Naive thymus-derived CD4-positive, alpha-beta T cell (primary cell): ENCODE measurements at regions of chr16 and their contacts with region 1.

Region 1: DNA sequence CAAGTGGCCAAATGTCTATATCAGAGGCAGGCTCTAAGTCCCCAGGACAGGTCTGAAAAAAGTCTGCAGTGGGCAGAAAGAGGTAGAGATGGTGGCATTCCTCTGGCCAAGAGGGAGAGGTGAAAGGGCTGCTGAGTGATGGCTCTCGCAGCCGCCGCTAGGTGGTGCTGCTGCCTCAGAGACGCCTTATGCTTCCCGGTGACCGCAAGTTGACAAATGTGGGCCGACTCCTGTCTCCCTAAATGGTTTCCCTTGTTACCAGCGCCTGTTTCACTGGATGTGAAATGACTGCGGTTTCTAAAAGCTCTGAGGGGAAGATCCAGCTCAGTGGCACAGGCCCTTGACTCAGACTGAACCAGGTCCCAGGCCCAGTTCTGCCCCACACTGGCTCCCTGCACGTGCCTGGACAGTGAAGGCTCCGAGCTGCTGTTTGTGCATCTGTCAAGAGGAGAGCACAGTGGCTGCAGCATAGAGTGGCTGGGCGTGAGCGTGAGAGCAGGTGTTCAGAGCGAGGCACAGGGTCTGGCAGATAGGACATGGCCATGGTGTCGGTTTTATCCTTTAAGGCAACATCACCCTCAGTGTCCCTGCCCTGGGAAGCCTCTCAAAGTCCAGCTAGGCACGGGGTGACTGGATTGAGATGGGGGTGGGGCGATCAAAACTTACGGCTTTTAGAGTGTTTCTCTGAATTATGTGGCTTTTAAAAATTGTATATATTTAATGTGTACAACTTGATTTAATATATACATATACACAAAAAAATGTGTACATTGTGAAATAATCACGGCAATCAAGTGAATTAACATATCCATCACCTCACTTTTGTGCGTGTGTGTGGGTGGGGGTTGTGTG is 19.9 kb downstream of the CLEC16A start:
- DNase-seq: peak; percentile 55 to 84 (median 69)
- ATAC-seq: peak; percentile 81
- H3K4me3 ChIP-seq: peak overlapping the region; percentile 3
- H3K4me3 Mint-ChIP-seq: peak overlapping the region in 6 of 10 donors; percentile 4 to 83 (median 52)
- H3K27ac ChIP-seq: no peak overlapping the region
- H3K27ac Mint-ChIP-seq: peak overlapping the region in 6 of 9 donors; percentile 47 to 91 (median 72)
- H3K4me1 ChIP-seq: peaks cover 11 to 18% of the 10 kb centered on the region in 2 donors
- H3K4me1 Mint-ChIP-seq: peaks cover 15 to 62% (median 28%) of the 10 kb centered on the region in 7 donors
- H3K27me3 ChIP-seq: no peaks in the 10 kb centered on the region
- H3K27me3 Mint-ChIP-seq: no peaks in the 10 kb centered on the region

Region 2: GRCh38 chr16:10652730-10653590 is 311.3 kb before region 1 on chr16:
- CTCF ChIA-PET with region 1: no interaction called
- POLR2A ChIA-PET with region 1: no interaction called
- intact Hi-C with region 1: no loop called
- DNase-seq: no peak
- ATAC-seq: no peak
- H3K4me3 ChIP-seq: no peak overlapping the region
- H3K4me3 Mint-ChIP-seq: no peak overlapping the region
- H3K27ac ChIP-seq: no peak overlapping the region
- H3K27ac Mint-ChIP-seq: no peak overlapping the region
- H3K4me1 ChIP-seq: no peaks in the 10 kb centered on the region
- H3K4me1 Mint-ChIP-seq: peaks cover 0 to 1% (median 0%) of the 10 kb centered on the region in 7 donors
- H3K27me3 ChIP-seq: no peaks in the 10 kb centered on the region
- H3K27me3 Mint-ChIP-seq: peaks cover 0 to 3% (median 0%) of the 10 kb centered on the region in 5 donors

Region 3: DNA sequence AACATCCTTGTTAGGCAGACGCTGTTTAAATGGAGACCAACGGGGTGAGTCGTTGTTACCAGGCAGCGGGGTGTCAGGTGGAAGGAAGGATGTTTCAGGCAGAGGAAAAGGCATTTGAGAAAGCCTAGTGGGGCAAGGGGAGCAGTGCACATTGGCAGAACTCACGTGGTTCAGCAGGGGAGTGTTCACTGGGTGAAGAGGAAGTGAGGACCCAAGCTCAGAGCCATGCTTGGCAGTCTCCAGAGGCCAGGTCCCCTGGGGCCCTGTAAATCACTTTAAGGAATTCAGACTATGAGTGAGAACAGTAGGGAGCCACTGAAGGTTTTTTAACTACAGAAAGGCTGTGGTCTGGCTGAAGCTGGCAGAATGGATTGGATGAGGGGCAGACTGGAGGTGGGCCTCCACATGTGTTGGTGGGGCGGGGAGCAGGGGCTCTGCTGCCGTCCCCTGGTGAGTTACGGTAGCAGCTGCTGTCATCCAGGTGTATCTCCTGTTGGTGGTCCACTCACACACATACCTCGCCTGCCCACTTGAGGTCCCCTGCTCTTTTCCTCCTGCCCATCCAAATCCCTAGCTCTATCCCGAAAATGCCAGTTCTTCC is 14.8 kb before region 1 on chr16:
- CTCF ChIA-PET with region 1: interaction called, 18 read pairs
- POLR2A ChIA-PET with region 1: interaction called, 5 read pairs
- intact Hi-C with region 1: loop called in 1 of 2 experiments (anchors 1 kb)
- DNase-seq: peak in 7 of 9 donors; percentile 41 to 69 (median 64)
- ATAC-seq: peak; percentile 83
- H3K4me3 ChIP-seq: no peak overlapping the region
- H3K4me3 Mint-ChIP-seq: peak overlapping the region in 9 of 10 donors; percentile 41 to 73 (median 60)
- H3K27ac ChIP-seq: peak overlapping the region; percentile 52
- H3K27ac Mint-ChIP-seq: peak overlapping the region; percentile 45 to 90 (median 76)
- H3K4me1 ChIP-seq: peaks cover 15 to 40% of the 10 kb centered on the region in 2 donors
- H3K4me1 Mint-ChIP-seq: peaks cover 31 to 78% (median 64%) of the 10 kb centered on the region in 7 donors
- H3K27me3 ChIP-seq: no peaks in the 10 kb centered on the region
- H3K27me3 Mint-ChIP-seq: no peaks in the 10 kb centered on the region

Region 4: DNA sequence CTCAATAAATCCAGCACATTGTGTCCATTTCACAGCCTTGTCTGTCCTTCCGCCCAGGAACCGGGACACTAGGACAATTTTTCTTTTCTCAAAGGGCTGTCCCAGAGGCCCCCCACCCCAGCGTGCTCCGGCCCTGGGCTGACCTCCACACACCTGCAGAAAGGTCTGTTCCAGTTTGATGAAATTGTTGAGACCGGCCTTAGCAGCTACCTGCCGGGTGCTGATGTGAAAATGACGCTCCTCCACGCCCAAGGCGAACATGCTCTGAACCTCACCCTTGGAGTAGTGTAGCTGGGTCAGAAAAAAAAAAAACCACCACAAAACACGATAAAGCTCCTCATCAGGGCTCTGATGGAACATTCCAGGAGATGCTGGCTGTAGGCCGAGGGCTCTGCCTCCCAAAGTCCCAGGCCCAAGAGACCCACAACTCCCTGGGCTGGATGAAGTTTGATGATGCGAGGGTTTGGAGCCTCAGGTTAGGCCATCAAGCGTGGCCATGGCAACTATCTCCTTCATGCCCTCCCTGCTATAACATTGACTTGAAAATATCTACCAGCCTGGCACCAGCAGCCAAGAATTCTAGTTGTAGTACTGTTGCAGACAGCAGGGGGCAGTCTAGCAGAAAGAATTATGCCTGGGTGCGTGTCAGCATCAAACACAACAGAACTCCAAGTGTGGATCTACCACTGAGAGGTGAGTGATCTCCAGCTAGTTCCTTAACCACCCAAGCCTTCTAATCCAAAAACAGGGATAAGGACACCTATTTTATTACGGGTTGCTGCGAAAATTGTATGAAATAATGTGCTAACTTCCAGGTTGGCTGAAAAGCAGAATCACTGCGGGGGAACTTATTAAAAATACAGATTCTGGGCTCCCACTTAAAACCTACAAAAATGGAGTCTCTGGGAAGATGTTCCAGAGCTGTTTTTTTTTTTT is 443.1 kb after region 1 on chr16:
- CTCF ChIA-PET with region 1: interaction called, 4 read pairs
- POLR2A ChIA-PET with region 1: no interaction called
- intact Hi-C with region 1: loop called (anchors 1 kb)
- DNase-seq: peak; percentile 44 to 78 (median 66)
- ATAC-seq: peak; percentile 85
- H3K4me3 ChIP-seq: no peak overlapping the region
- H3K4me3 Mint-ChIP-seq: no peak overlapping the region
- H3K27ac ChIP-seq: no peak overlapping the region
- H3K27ac Mint-ChIP-seq: peak overlapping the region in 2 of 9 donors; percentile 16 to 72
- H3K4me1 ChIP-seq: no peaks in the 10 kb centered on the region
- H3K4me1 Mint-ChIP-seq: peaks cover 0 to 5% (median 4%) of the 10 kb centered on the region in 7 donors
- H3K27me3 ChIP-seq: no peaks in the 10 kb centered on the region
- H3K27me3 Mint-ChIP-seq: no peaks in the 10 kb centered on the region

Region 5: DNA sequence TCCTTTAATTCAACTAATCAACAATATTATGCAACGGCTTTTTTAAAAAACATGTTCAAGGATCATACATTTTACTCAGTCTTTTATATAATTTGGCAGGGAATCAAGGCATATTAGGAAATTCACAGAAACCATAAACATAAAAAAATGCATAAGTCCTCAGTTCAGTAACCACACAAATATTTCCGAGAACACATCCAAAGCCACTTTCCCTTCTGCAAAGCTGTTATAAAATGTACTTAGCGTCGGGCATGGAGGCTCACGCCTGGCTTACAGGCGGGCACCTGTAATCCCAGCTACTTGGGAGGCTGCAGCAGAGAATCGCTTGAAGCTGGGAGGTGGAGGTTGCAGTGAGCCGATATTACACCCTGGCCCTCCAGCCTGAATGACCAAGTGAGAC is 842.5 kb after region 1 on chr16:
- CTCF ChIA-PET with region 1: no interaction called
- POLR2A ChIA-PET with region 1: no interaction called
- intact Hi-C with region 1: loop called in 1 of 2 experiments (anchors 5 kb)
- DNase-seq: no peak
- ATAC-seq: no peak
- H3K4me3 ChIP-seq: no peak overlapping the region
- H3K4me3 Mint-ChIP-seq: no peak overlapping the region
- H3K27ac ChIP-seq: no peak overlapping the region
- H3K27ac Mint-ChIP-seq: no peak overlapping the region
- H3K4me1 ChIP-seq: no peaks in the 10 kb centered on the region
- H3K4me1 Mint-ChIP-seq: peaks cover 5 to 12% (median 11%) of the 10 kb centered on the region in 7 donors
- H3K27me3 ChIP-seq: no peaks in the 10 kb centered on the region
- H3K27me3 Mint-ChIP-seq: no peaks in the 10 kb centered on the region